ENCODE measurements at regions of chr5 and their contacts with region 1.

Region 1: DNA sequence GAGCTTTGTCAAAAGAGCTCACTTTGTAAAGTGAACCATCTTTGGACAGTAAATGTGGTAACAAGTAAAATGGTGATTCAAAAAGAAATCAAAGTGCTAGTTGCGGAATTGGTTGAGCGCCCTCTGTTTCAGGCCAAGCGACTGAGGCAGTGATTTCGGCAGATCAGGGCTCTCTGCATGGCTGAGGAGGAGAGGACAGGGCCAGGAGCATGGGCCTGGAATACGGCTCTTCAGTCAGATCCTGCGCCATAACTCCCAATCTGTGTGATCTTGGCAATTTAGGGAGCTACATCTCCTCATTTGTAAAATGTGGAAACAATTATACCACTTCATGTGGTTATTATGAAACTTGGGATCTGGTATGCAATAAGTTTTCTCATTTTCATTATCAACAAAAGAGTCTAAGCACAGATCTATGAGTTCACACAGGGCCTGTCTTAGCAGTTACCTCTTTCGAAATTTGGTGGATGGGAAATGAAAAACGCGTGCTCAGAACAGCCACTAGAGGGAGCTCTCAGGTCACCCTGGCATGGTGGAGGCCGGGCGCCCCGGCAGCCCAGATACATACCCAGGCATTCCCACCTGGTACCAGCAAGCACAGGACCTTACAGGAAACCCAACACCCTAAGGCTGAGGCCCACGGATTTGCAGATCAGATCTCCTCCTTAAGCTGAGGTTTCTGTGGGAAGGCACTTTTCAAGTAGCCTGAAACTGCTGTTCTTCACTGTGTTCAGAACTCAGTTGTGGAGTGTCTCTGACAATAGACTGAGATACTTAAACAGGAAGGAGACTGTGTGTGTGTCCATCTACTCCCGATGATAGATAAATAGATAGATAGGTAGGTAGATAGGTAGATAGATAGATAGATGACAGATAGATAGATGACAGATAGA is 303.7 kb downstream of the RAB3C start:
- DNase-seq: peak; percentile 78
- H3K4me3 Mint-ChIP-seq: no peak overlapping the region
- H3K27ac Mint-ChIP-seq: peak overlapping the region; percentile 76
- H3K4me1 Mint-ChIP-seq: peaks cover 34% of the 10 kb centered on the region
- H3K27me3 Mint-ChIP-seq: peaks cover 5% of the 10 kb centered on the region

Region 2: GRCh38 chr5:58505971-58506640 is 380.5 kb before region 1 on chr5:
- CTCF ChIA-PET with region 1: no interaction called
- intact Hi-C with region 1: no loop called
- DNase-seq: no peak
- H3K4me3 Mint-ChIP-seq: no peak overlapping the region
- H3K27ac Mint-ChIP-seq: no peak overlapping the region
- H3K4me1 Mint-ChIP-seq: no peaks in the 10 kb centered on the region
- H3K27me3 Mint-ChIP-seq: peaks cover 20% of the 10 kb centered on the region

Region 3: GRCh38 chr5:58925627-58926540 is 39.3 kb after region 1 on chr5:
- CTCF ChIA-PET with region 1: interaction called, 5 read pairs
- intact Hi-C with region 1: loop called (anchors 1 kb)
- DNase-seq: peak; percentile 43
- H3K4me3 Mint-ChIP-seq: peak overlapping the region; percentile 39
- H3K27ac Mint-ChIP-seq: peak overlapping the region; percentile 84
- H3K4me1 Mint-ChIP-seq: peaks cover 39% of the 10 kb centered on the region
- H3K27me3 Mint-ChIP-seq: peaks cover 2% of the 10 kb centered on the region

Region 4: GRCh38 chr5:58972301-58972700 is 85.7 kb after region 1 on chr5:
- CTCF ChIA-PET with region 1: interaction called, 14 read pairs
- intact Hi-C with region 1: loop called (anchors 2 kb)
- DNase-seq: no peak
- H3K4me3 Mint-ChIP-seq: no peak overlapping the region
- H3K27ac Mint-ChIP-seq: no peak overlapping the region
- H3K4me1 Mint-ChIP-seq: peaks cover 15% of the 10 kb centered on the region
- H3K27me3 Mint-ChIP-seq: no peaks in the 10 kb centered on the region

Region 5: DNA sequence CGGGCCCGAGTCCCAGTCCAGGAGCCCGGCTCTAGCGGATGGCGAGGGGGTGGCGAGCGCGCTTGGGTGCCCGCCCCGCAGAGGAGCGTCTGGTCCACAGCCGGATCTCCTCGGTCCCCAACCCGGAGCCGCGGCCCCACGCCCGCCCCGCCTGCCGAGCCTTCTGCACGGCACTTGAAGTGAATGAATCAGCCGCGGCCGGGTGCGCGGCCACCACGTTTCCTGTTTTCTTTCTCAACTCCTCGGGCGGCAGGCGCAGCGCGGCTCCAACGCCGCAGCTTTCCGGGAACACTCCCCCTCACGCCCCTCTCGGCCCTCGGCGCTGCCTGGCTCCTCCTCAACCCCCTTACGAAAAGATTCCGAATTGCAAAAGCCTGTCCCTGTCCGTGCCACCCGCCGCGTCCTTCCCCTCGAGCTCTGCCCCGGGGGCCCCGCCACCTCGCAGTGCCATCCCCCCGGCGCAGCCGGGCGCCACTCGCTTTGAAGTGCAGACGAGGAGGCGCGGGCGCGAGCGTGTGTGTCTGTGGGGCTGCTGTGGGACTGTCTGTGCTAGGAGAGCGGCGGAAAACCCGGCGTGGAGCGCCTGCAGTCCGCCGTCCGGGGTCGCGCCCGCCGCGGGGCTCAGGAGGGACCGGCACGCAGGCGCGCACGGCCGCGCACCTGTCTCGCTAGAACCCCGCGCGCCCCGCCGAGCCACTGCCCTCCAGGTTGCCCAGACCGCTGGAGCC is 152.9 kb after region 1 on chr5:
- CTCF ChIA-PET with region 1: interaction called, 13 read pairs
- intact Hi-C with region 1: loop called (anchors 1 kb)
- DNase-seq: peak; percentile 90
- H3K4me3 Mint-ChIP-seq: peak overlapping the region; percentile 94
- H3K27ac Mint-ChIP-seq: peak overlapping the region; percentile 96
- H3K4me1 Mint-ChIP-seq: peaks cover 44% of the 10 kb centered on the region
- H3K27me3 Mint-ChIP-seq: no peaks in the 10 kb centered on the region

Region 6: GRCh38 chr5:59174248-59174844 is 287.8 kb after region 1 on chr5:
- CTCF ChIA-PET with region 1: interaction called, 58 read pairs
- intact Hi-C with region 1: loop called (anchors 1 kb)
- DNase-seq: peak; percentile 48
- H3K4me3 Mint-ChIP-seq: no peak overlapping the region
- H3K27ac Mint-ChIP-seq: no peak overlapping the region
- H3K4me1 Mint-ChIP-seq: peaks cover 10% of the 10 kb centered on the region
- H3K27me3 Mint-ChIP-seq: no peaks in the 10 kb centered on the region

Region 7: GRCh38 chr5:59367791-59368394 is 481.3 kb after region 1 on chr5:
- CTCF ChIA-PET with region 1: interaction called, 4 read pairs
- intact Hi-C with region 1: loop called (anchors 1 kb)
- DNase-seq: peak; percentile 73
- H3K4me3 Mint-ChIP-seq: no peak overlapping the region
- H3K27ac Mint-ChIP-seq: no peak overlapping the region
- H3K4me1 Mint-ChIP-seq: peaks cover 5% of the 10 kb centered on the region
- H3K27me3 Mint-ChIP-seq: peaks cover 3% of the 10 kb centered on the region

Region 8: DNA sequence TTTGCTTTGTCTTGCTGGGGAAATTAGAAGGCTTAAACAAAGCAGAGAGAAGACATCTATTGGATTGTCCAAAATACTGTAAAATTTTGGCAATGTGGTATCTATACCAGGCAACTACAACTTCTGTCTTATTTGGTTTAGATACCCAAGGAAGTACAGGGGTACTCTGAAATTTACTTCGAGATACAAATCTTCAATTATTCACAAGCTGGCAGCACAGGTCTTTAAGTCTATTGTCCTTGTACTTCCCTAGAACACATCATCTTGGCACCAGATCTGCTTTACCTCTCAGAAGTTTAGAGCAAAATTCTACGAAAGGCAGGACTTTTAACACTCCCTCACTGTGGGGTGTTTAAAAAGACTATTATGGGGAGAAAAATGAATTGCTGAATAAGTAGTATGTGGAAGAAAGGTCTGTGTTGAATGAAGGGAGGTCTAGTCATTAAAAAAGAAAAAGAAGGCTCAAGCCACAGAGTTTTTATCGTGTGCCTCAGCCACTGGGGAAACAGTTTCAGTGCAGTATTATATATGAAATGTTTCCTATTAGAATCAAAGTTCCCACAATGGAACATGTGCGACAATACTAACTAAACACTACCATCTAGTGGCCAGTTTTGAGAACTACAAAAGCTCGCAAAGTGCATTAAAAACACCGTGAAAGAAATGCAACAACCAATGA is 913.2 kb after region 1 on chr5:
- CTCF ChIA-PET with region 1: no interaction called
- intact Hi-C with region 1: loop called (anchors 5 kb)
- DNase-seq: peak; percentile 30
- H3K4me3 Mint-ChIP-seq: no peak overlapping the region
- H3K27ac Mint-ChIP-seq: no peak overlapping the region
- H3K4me1 Mint-ChIP-seq: no peaks in the 10 kb centered on the region
- H3K27me3 Mint-ChIP-seq: peaks cover 7% of the 10 kb centered on the region